Cardiac septum (tissue), 1 donor: ENCODE measurements at regions of chr1 and their contacts with region 1.

Region 1: GRCh38 chr1:235923466-235924021 is 56.8 kb upstream of the LYST start:
- DNase-seq: no peak

Region 2: GRCh38 chr1:235883261-235883927 is 40.1 kb before region 1 on chr1:
- intact Hi-C with region 1: loop called (anchors 5 kb)
- DNase-seq: peak; percentile 92